Caco-2 (cell line): ENCODE measurements at regions of chr19 and their contacts with region 1.

Region 1: GRCh38 chr19:38759590-38760003 is 13.7 kb downstream of the LGALS7 start:
- DNase-seq: no peak
- H3K4me3 ChIP-seq: no peak overlapping the region
- H3K4me3 Mint-ChIP-seq: no peak overlapping the region
- H3K27ac Mint-ChIP-seq: no peak overlapping the region
- H3K4me1 ChIP-seq: peaks cover 9% of the 10 kb centered on the region; the same call in 1 of the 2 replicates
- H3K4me1 Mint-ChIP-seq: peaks cover 4% of the 10 kb centered on the region
- H3K27me3 ChIP-seq: no peaks in the 10 kb centered on the region
- H3K27me3 Mint-ChIP-seq: no peaks in the 10 kb centered on the region
- CTCF ChIP-seq: no peak

Region 2: GRCh38 chr19:38606131-38606530 is 153.5 kb before region 1 on chr19:
- CTCF ChIA-PET with region 1: no interaction called
- POLR2A ChIA-PET with region 1: interaction called, 12 read pairs
- intact Hi-C with region 1: no loop called
- DNase-seq: no peak
- H3K4me3 ChIP-seq: no peak overlapping the region
- H3K4me3 Mint-ChIP-seq: no peak overlapping the region
- H3K27ac Mint-ChIP-seq: no peak overlapping the region
- H3K4me1 ChIP-seq: no peaks in the 10 kb centered on the region
- H3K4me1 Mint-ChIP-seq: no peaks in the 10 kb centered on the region
- H3K27me3 ChIP-seq: no peaks in the 10 kb centered on the region
- H3K27me3 Mint-ChIP-seq: no peaks in the 10 kb centered on the region
- CTCF ChIP-seq: no peak

Region 3: DNA sequence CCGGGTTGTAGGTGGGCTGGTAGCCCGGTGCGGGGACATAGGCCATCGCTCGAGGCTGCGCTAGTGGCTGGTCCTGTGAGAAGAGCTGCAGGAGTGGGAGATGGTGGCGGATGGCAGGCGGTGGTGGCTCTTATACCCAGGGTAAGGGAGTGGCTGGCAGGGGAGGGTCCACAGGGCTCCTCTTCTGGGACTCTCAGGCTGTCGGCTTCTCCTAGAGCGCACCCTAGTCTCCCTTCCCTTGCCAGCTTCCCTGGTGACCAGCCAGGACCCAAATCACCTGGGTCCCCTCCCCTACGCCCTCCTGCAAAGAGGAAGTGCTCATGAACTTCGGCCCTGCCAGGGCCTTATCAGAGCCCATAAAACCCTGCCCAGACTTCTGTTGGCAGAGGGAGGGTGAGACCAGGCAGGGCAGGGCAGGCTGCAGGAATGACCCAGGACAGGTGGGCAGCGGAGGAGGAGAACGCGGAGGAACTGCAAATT is 53.3 kb after region 1 on chr19 and contains the start of gene LGALS4:
- CTCF ChIA-PET with region 1: no interaction called
- POLR2A ChIA-PET with region 1: interaction called, 11 read pairs
- intact Hi-C with region 1: no loop called
- DNase-seq: no peak
- H3K4me3 ChIP-seq: no peak within 1 kb of the TSS
- H3K4me3 Mint-ChIP-seq: no peak within 1 kb of the TSS
- H3K27ac Mint-ChIP-seq: peak within 1 kb of the TSS; percentile 30
- H3K4me1 ChIP-seq: peaks cover 24% of the 10 kb centered on the region
- H3K4me1 Mint-ChIP-seq: peaks cover 26% of the 10 kb centered on the region
- H3K27me3 ChIP-seq: no peaks in the 10 kb centered on the region
- H3K27me3 Mint-ChIP-seq: no peaks in the 10 kb centered on the region
- CTCF ChIP-seq: no peak
- total RNA-seq, gene LGALS4: 1.6 and 2.2 TPM in 2 replicates